ENCODE measurements at regions of chr16 and their contacts with region 1.

Region 1: GRCh38 chr16:27426423-27427408 is 24.7 kb downstream of the IL21R start:
- DNase-seq: peak; percentile 94
- H3K4me3 Mint-ChIP-seq: peak overlapping the region; percentile 29
- H3K27ac Mint-ChIP-seq: peak overlapping the region; percentile 92
- H3K4me1 Mint-ChIP-seq: peaks cover 83% of the 10 kb centered on the region
- H3K27me3 Mint-ChIP-seq: no peaks in the 10 kb centered on the region

Region 2: GRCh38 chr16:27374804-27375425 is 51.8 kb before region 1 on chr16:
- CTCF ChIA-PET with region 1: no interaction called
- intact Hi-C with region 1: no loop called
- DNase-seq: peak; percentile 81
- H3K4me3 Mint-ChIP-seq: no peak overlapping the region
- H3K27ac Mint-ChIP-seq: no peak overlapping the region
- H3K4me1 Mint-ChIP-seq: peaks cover 47% of the 10 kb centered on the region
- H3K27me3 Mint-ChIP-seq: no peaks in the 10 kb centered on the region

Region 3: GRCh38 chr16:27449434-27450195 is 22.9 kb after region 1 on chr16:
- CTCF ChIA-PET with region 1: interaction called, 5 read pairs
- intact Hi-C with region 1: loop called (anchors 2 kb)
- DNase-seq: peak; percentile 92
- H3K4me3 Mint-ChIP-seq: peak overlapping the region; percentile 61
- H3K27ac Mint-ChIP-seq: peak overlapping the region; percentile 94
- H3K4me1 Mint-ChIP-seq: peaks cover 86% of the 10 kb centered on the region
- H3K27me3 Mint-ChIP-seq: no peaks in the 10 kb centered on the region

Region 4: DNA sequence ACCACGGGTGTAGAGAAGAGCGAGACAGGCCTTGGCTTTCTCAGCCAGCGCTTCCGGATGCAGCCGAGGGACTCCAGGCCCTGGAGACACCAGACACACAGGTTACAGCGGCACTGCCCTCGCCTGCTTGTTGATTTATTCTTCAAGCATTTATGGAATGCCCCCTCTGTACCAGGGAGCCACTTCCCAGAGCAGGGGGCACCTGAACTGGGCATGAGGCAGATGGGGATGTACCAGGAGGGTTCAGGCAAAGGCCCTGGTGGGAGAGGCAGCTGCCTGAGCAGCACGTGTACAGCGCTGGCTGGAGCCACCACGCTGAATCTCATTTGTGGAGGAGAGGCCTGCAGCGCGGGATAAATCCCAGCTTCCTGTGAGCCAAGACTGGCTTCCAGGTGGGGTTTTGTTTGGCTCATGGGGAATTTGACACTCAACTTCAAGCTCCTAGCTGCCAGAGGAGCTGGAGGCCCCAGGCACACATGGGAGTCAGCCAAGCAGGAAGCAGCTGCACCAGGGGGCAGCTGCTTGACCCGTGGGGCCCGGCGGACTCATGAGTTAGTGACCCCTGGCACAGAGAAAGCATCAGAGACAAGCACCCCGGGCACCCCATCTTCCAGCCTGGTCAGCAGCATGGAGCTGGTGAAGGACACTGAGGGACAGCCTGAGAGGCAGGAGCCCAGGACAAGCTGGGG is 34.9 kb after region 1 on chr16:
- CTCF ChIA-PET with region 1: no interaction called
- intact Hi-C with region 1: no loop called
- DNase-seq: no peak
- H3K4me3 Mint-ChIP-seq: no peak overlapping the region
- H3K27ac Mint-ChIP-seq: no peak overlapping the region
- H3K4me1 Mint-ChIP-seq: peaks cover 30% of the 10 kb centered on the region
- H3K27me3 Mint-ChIP-seq: no peaks in the 10 kb centered on the region

Measured in activated naive CD4-positive, alpha-beta T cell treated with anti-CD3 and anti-CD28 coated beads for 36 hours (primary cell).